IMR-90 (cell line): ENCODE measurements at regions of chr12 and their contacts with region 1.

Region 1: DNA sequence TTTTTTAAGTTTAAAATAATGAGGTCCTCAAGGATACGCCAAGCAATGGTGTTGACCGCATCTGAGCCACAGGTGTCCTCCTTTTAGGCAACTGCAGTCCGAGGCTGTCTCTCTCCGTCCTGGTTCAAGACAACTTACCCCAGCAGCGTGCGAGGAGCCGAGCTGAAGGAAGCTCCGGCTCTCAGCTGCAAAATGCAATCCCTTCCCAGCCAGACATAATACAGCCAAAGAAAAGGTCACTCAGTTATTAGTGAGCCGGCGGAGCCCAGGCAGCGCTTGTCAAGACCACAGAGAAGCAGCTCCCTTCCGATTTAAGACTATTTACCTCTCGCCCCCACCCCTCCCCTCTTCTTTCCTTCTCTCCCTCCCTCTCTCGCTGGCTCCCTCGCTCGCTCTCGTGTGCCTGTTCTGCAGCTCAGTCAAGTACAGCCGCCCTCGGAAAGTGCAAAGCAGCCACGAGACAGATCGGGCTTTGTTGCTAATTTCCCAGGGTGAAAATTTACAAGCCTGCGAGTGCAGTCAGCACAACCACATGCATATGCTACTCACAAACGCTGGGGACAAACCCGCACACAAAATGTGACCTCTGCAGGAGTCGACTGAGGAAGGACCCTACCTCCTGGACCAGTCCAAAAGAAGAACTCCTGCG is 363 bp upstream of the LMO3 start:
- DNase-seq: peak; percentile 27
- ATAC-seq: peak; percentile 69
- H3K4me3 ChIP-seq: peak overlapping the region; percentile 62
- H3K27ac ChIP-seq: no peak overlapping the region
- H3K4me1 ChIP-seq: peaks cover 2% of the 10 kb centered on the region; the same call in 1 of the 2 replicates
- H3K27me3 ChIP-seq: peaks cover 26% of the 10 kb centered on the region
- CTCF ChIP-seq: no peak
- POLR2A ChIP-seq: no peak
- RAD21 ChIP-seq: no peak

Region 2: GRCh38 chr12:15979096-15980092 is 626.9 kb before region 1 on chr12:
- CTCF ChIA-PET with region 1: no interaction called
- POLR2A ChIA-PET with region 1: no interaction called
- dilution Hi-C with region 1: no loop called
- in situ Hi-C with region 1: no loop called
- intact Hi-C with region 1: loop called (anchors 5 kb)
- DNase-seq: peak; percentile 93
- ATAC-seq: peak; percentile 74
- H3K4me3 ChIP-seq: no peak overlapping the region
- H3K27ac ChIP-seq: peak overlapping the region; percentile 81
- H3K4me1 ChIP-seq: peaks cover 22% of the 10 kb centered on the region
- H3K27me3 ChIP-seq: no peaks in the 10 kb centered on the region
- CTCF ChIP-seq: peak; percentile 37
- POLR2A ChIP-seq: no peak
- RAD21 ChIP-seq: no peak

Region 3: GRCh38 chr12:16369156-16369555 is 237.2 kb before region 1 on chr12:
- CTCF ChIA-PET with region 1: no interaction called
- POLR2A ChIA-PET with region 1: no interaction called
- dilution Hi-C with region 1: no loop called
- in situ Hi-C with region 1: no loop called
- intact Hi-C with region 1: loop called (anchors 5 kb)
- DNase-seq: peak; percentile 24
- ATAC-seq: peak; percentile 14; the same call in 1 of the 2 replicates
- H3K4me3 ChIP-seq: no peak overlapping the region
- H3K27ac ChIP-seq: no peak overlapping the region
- H3K4me1 ChIP-seq: no peaks in the 10 kb centered on the region; the same call in 1 of the 2 replicates
- H3K27me3 ChIP-seq: no peaks in the 10 kb centered on the region
- CTCF ChIP-seq: no peak
- POLR2A ChIP-seq: no peak
- RAD21 ChIP-seq: no peak

Region 4: DNA sequence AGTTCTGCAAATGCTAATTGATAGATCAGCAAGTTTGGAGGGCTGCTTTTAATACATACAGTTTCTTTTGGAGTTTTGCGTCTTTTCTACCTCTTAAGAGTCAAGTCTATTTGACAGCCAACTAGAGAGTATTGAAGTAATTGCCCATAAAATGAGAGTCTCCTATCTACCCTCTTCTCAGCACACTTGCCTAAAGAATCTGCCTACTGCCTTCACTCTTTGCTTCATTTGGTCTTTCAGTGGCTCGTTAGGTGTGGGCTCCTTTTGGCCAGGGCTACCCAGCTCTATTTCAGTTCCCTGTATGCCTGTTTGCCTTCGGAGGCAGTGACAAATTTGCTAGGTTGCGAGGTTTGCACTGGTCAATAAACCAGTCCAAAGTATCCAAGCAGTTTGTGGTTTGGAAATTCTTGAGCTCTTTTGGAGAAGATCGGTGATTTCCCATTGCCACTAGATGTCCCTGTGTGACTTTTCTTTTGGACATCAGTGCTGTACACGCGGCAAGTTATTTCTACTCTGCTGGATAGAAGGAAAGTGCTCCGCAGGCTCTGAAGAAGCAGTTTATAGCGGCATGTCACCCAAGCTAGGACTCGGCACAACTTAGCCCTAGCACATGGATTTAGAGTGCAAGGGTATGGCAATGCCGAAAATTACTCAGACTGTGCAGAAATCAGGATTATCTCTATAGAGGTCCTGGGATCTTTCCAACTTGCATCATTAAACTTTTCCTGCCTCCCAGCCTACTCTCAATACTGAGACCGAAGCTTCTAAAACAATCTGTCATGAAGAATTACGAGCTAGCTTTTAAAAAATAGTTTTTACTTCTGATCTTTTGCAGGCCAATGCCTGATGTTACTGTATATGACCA is 220.3 kb before region 1 on chr12:
- CTCF ChIA-PET with region 1: interaction called, 3 read pairs
- POLR2A ChIA-PET with region 1: no interaction called
- dilution Hi-C with region 1: no loop called
- in situ Hi-C with region 1: no loop called
- intact Hi-C with region 1: loop called (anchors 2 kb)
- DNase-seq: peak; percentile 70
- ATAC-seq: peak; percentile 93
- H3K4me3 ChIP-seq: no peak overlapping the region
- H3K27ac ChIP-seq: no peak overlapping the region
- H3K4me1 ChIP-seq: peaks cover 2% of the 10 kb centered on the region; the same call in 1 of the 2 replicates
- H3K27me3 ChIP-seq: no peaks in the 10 kb centered on the region
- CTCF ChIP-seq: peak; percentile 67
- POLR2A ChIP-seq: no peak
- RAD21 ChIP-seq: peak; percentile 74

Region 5: DNA sequence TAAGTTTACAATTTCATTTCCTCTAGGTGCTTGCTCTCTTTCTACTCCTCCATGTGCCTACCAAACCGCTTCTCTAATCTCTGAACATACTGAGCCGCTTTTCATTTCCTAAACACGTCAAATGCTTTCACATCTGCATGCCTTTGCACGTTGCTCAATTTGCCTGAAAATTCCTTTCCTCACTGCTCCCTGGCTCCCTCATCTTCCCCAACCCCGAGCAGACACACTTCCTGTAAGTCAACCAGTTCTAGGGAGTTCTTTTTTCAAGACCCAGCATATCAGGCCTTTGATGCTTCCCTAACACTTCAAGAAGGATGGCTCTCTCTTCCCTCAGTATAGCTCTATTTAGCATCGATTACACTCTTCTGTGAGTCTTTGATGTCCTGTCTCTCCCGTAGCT is 50.7 kb before region 1 on chr12:
- CTCF ChIA-PET with region 1: no interaction called
- POLR2A ChIA-PET with region 1: no interaction called
- dilution Hi-C with region 1: no loop called
- in situ Hi-C with region 1: no loop called
- intact Hi-C with region 1: loop called (anchors 2 kb)
- DNase-seq: peak; percentile 87
- ATAC-seq: peak; percentile 85
- H3K4me3 ChIP-seq: no peak overlapping the region
- H3K27ac ChIP-seq: no peak overlapping the region
- H3K4me1 ChIP-seq: no peaks in the 10 kb centered on the region
- H3K27me3 ChIP-seq: no peaks in the 10 kb centered on the region
- CTCF ChIP-seq: no peak
- POLR2A ChIP-seq: no peak
- RAD21 ChIP-seq: no peak

Region 6: DNA sequence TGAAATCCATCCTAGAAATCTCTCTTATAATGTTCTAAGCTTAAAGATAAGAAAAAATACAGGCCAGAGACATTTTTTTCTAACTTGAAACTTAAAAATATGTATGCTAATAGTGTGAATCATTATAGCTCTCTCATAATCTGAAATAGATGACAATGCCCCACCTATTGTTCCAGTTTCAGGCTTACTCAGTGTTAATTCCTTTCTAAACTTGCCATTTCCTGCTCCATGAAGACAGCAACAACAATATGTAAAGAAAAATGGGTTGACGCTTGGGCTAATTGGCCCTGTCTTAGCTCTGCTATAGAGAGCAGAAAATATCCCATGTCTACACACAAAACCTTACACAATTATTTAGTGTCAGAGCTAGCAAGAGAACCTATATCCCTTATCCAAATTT is 37.5 kb before region 1 on chr12:
- CTCF ChIA-PET with region 1: no interaction called
- POLR2A ChIA-PET with region 1: no interaction called
- dilution Hi-C with region 1: no loop called
- in situ Hi-C with region 1: no loop called
- intact Hi-C with region 1: no loop called
- DNase-seq: no peak
- ATAC-seq: no peak
- H3K4me3 ChIP-seq: no peak overlapping the region
- H3K27ac ChIP-seq: no peak overlapping the region
- H3K4me1 ChIP-seq: no peaks in the 10 kb centered on the region
- H3K27me3 ChIP-seq: no peaks in the 10 kb centered on the region
- CTCF ChIP-seq: no peak
- POLR2A ChIP-seq: no peak
- RAD21 ChIP-seq: no peak

Region 7: GRCh38 chr12:16636435-16637055 is 30.2 kb after region 1 on chr12:
- CTCF ChIA-PET with region 1: no interaction called
- POLR2A ChIA-PET with region 1: no interaction called
- dilution Hi-C with region 1: no loop called
- in situ Hi-C with region 1: no loop called
- intact Hi-C with region 1: no loop called
- DNase-seq: no peak
- ATAC-seq: no peak
- H3K4me3 ChIP-seq: no peak overlapping the region
- H3K27ac ChIP-seq: no peak overlapping the region
- H3K4me1 ChIP-seq: no peaks in the 10 kb centered on the region
- H3K27me3 ChIP-seq: no peaks in the 10 kb centered on the region
- CTCF ChIP-seq: no peak
- POLR2A ChIP-seq: no peak
- RAD21 ChIP-seq: no peak